ENCODE measurements at regions of chr2 and their contacts with region 1.

Region 1: GRCh38 chr2:215269397-215270119 is 42.3 kb upstream of the ATIC start:
- DNase-seq: peak in 5 of 10 donors; percentile 28 to 59 (median 46)
- H3K4me3 ChIP-seq: peak overlapping the region in 55 of 59 donors; percentile 1 to 58 (median 39)
- H3K27ac ChIP-seq: peak overlapping the region in 26 of 59 donors; percentile 2 to 76 (median 32)
- H3K27me3 ChIP-seq: no peaks in the 10 kb centered on the region
- CTCF ChIP-seq: peak; percentile 53 to 91 (median 83)

Region 2: DNA sequence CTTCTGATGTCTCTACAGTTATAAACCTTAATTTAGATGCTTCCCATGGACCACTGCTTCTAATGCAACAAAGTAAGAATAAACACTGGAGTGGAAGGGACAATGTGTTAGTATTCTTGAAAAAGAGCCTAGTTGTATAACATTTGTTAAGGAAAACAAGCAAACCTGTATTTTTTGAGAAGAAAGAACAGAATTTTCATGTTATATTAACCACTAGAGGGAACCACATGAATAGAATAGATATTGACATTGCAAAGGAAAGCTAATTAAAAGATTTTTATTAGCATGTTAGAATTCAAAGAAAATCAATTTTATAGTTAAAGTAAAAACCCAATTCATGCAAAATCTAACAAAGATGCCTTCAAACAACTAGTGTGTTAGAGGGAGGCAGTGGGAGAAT is 308.9 kb before region 1 on chr2:
- intact Hi-C with region 1: loop called in 1 of 2 experiments (anchors 5 kb)
- DNase-seq: no peak
- H3K4me3 ChIP-seq: no peak overlapping the region
- H3K27ac ChIP-seq: no peak overlapping the region
- H3K27me3 ChIP-seq: no peaks in the 10 kb centered on the region
- CTCF ChIP-seq: peak; percentile 31 to 74 (median 52)

Measured in dorsolateral prefrontal cortex (tissue), 120 donors.